ENCODE measurements at regions of chr16 and their contacts with region 1.

Region 1: DNA sequence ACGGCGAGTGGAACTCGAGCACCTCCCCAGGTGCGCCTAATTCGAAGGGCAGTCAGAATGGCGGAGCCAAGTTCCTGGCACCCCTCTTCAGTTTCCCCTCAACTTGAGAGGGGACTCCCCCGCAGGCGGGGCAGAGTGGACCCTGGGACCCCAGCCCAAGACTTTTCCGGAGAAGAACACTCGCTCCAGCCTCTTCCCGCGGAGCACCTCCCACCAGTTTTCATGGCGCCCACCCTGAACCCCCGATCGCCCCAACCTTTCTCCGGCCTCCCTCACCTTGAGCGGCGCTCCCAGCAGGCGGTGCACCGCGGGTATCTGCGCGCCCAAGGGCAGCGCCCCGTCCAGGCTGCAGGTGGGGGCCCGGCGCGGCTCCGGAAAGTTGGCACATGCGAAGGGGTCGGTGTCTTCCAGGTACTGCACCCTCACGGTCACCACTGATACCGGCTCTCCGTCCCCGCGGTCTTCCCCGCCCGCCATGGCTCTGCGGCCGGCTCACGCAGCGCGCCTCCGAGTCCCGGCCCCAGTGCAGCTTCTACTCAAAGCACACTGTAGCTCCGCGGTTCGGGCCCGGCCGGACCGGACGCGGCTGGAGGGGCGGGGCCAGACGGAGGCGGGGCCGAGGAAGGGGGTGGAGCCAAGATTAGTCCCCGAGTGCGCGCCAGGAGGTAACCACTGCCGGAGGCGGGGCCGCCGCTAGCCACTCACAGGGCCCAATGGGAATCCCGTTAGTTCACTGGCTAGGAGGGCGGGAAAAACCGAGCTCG is at the start of gene FHOD1:
- DNase-seq: peak; percentile 94 to 98 (median 96)
- ATAC-seq: peak; percentile 84
- H3K4me3 ChIP-seq: peak within 1 kb of the TSS; percentile 88
- H3K27ac ChIP-seq: peak within 1 kb of the TSS; percentile 68
- H3K4me1 ChIP-seq: peaks cover 51 to 70% of the 10 kb centered on the region in 2 experiments
- H3K27me3 ChIP-seq: no peaks in the 10 kb centered on the region
- CTCF ChIP-seq: no peak
- EP300 ChIP-seq: no peak
- POLR2A ChIP-seq: peak; percentile 90
- RAD21 ChIP-seq: no peak
- polyA plus RNA-seq, gene FHOD1: 18.7 to 19.2 TPM

Region 2: DNA sequence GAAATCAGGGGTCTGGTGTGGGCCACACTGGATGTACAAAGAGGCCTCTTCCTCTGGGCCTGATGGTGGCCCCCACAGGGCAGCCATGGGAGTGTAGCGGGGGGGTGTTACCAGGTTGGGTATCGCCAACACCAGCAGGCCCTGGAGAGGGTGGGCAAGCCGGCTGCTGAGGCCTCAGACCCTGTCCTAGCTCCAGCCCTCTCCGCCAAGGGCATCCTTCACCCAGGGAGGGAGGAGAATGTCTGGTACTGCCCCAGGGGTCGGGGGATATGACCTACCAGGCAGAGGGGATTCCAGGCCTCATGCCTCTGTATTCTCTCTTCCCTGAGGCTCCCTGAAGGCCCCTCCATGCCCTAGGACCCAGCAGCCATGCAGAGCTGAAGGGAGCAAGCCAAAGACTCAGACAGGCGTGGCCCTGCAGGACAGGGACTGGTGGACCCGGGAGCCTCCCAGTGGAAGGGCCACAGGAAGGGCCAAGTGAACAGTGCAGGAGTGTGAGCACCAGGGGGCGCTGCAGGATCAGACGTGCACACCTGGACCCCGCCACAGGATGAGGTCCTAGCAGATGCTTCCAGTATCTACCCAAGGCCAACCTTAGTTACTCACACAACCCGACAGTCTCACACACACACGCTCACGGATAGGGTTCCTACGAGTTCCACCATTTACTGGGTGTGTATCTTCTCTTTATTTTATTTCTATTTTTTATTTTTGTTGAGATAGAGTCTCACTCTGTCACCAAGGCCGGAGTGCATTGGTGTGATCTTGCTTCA is 269.6 kb before region 1 on chr16:
- CTCF ChIA-PET with region 1: no interaction called
- POLR2A ChIA-PET with region 1: no interaction called
- in situ Hi-C with region 1: no loop called
- intact Hi-C with region 1: loop called (anchors 10 kb)
- DNase-seq: peak; percentile 89 to 93 (median 92)
- ATAC-seq: peak; percentile 98
- H3K4me3 ChIP-seq: no peak overlapping the region
- H3K27ac ChIP-seq: no peak overlapping the region
- H3K4me1 ChIP-seq: peaks cover 3 to 26% of the 10 kb centered on the region in 2 experiments; a peak in 4 of 5 replicates
- H3K27me3 ChIP-seq: no peaks in the 10 kb centered on the region
- CTCF ChIP-seq: peak; percentile 94 to 98 (median 97)
- EP300 ChIP-seq: no peak
- POLR2A ChIP-seq: no peak
- RAD21 ChIP-seq: peak; percentile 95 to 98

Region 3: GRCh38 chr16:67183627-67184328 is 63.3 kb before region 1 on chr16 and contains the start of gene MATCAP1:
- CTCF ChIA-PET with region 1: interaction called, 4 read pairs
- POLR2A ChIA-PET with region 1: no interaction called
- in situ Hi-C with region 1: no loop called
- intact Hi-C with region 1: loop called (anchors 1 kb)
- DNase-seq: peak; percentile 98 to 100 (median 98)
- ATAC-seq: peak; percentile 97
- H3K4me3 ChIP-seq: peak within 1 kb of the TSS; percentile 61
- H3K27ac ChIP-seq: peak within 1 kb of the TSS; percentile 91
- H3K4me1 ChIP-seq: peaks cover 13 to 50% of the 10 kb centered on the region in 2 experiments
- H3K27me3 ChIP-seq: no peaks in the 10 kb centered on the region
- CTCF ChIP-seq: no peak; a peak in 1 of 6 replicates
- EP300 ChIP-seq: no peak
- POLR2A ChIP-seq: peak; percentile 88
- RAD21 ChIP-seq: no peak
- polyA plus RNA-seq, gene MATCAP1: 3.4 to 3.8 TPM

Region 4: DNA sequence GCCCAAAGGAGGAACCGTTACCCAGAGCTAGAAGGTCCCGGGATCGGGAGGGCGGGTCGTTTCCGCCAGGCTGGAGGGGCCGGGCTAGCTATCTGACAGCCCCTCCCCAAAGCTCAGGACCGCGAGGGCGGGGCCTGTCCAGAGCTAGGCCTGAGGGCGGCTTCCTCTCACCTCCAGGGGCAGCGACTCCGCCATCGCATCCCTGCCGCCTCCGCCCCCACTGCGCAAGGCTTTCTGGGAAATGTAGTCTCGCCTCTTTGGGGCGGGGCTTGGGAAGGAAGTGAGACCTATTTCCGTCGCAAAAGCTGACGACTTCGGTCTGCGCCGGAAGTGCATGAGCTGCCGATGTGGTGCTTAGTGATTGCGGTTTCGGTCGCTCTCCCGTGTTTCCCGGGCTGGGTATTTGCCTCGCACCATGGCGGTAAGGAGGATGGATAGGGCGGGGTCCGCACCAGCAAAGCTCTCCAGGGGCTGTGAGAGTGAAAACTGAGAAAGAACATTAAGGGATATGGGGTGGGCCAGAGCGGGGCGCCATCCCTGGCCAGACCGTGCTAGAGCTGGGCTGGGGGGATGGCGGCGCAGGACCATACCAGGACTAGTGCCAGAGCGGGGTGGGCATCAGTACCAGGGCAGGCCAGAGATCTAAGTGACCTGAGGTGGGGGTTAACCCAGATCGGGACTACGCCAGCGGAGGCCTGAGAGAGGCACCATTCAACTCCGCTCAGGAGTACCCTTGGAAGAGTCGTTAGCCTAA is 20.1 kb before region 1 on chr16 and contains the start of gene TMEM208:
- CTCF ChIA-PET with region 1: no interaction called
- POLR2A ChIA-PET with region 1: interaction called, 14 read pairs
- in situ Hi-C with region 1: no loop called
- intact Hi-C with region 1: no loop called
- DNase-seq: peak; percentile 96 to 99 (median 98)
- ATAC-seq: peak; percentile 98
- H3K4me3 ChIP-seq: peak within 1 kb of the TSS; percentile 98
- H3K27ac ChIP-seq: peak within 1 kb of the TSS; percentile 74
- H3K4me1 ChIP-seq: peaks cover 18 to 20% of the 10 kb centered on the region in 2 experiments
- H3K27me3 ChIP-seq: no peaks in the 10 kb centered on the region
- CTCF ChIP-seq: peak in 2 of 3 experiments; percentile 27 to 28; a peak in 4 of 6 replicates
- EP300 ChIP-seq: 0 out of 2 replicates have a peak, but pooled peaks have one; percentile 19
- POLR2A ChIP-seq: peak; percentile 86
- RAD21 ChIP-seq: peak in 1 of 2 experiments; percentile 6; a peak in 1 of 4 replicates
- polyA plus RNA-seq, gene TMEM208: 233 to 239 TPM

Region 5: DNA sequence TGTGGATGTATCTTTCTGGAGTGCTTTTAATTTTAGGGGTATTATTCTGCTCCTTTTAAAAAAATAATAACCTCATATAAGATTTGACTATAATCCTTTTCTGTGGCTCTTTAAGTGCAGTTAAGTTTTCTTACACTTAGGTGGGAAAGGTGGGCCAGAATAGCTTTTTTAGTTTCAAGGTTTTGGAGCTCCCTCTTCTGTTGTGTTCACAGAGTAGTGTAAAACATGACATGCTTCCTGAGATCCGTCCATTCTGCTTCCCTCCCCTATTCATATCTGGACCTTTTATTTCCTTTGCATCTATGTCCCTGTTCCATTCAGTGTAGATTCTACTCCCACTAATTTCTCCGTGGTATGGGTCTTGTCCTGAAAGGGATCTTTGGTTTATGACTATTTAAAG is 92.3 kb after region 1 on chr16:
- CTCF ChIA-PET with region 1: interaction called, 3 read pairs
- POLR2A ChIA-PET with region 1: no interaction called
- in situ Hi-C with region 1: loop called (anchors 5 kb)
- intact Hi-C with region 1: no loop called
- DNase-seq: peak in 1 of 4 experiments; percentile 31
- ATAC-seq: peak; percentile 59
- H3K4me3 ChIP-seq: no peak overlapping the region
- H3K27ac ChIP-seq: no peak overlapping the region
- H3K4me1 ChIP-seq: no peaks in the 10 kb centered on the region
- H3K27me3 ChIP-seq: no peaks in the 10 kb centered on the region
- CTCF ChIP-seq: peak in 2 of 3 experiments; percentile 22 to 52; a peak in 3 of 6 replicates
- EP300 ChIP-seq: no peak
- POLR2A ChIP-seq: no peak
- RAD21 ChIP-seq: peak; percentile 15 to 55; a peak in 3 of 4 replicates

Measured in K562 (cell line).